Common myeloid progenitor, CD34-positive (primary cell): ENCODE measurements at regions of chr12 and their contacts with region 1.

Region 1: DNA sequence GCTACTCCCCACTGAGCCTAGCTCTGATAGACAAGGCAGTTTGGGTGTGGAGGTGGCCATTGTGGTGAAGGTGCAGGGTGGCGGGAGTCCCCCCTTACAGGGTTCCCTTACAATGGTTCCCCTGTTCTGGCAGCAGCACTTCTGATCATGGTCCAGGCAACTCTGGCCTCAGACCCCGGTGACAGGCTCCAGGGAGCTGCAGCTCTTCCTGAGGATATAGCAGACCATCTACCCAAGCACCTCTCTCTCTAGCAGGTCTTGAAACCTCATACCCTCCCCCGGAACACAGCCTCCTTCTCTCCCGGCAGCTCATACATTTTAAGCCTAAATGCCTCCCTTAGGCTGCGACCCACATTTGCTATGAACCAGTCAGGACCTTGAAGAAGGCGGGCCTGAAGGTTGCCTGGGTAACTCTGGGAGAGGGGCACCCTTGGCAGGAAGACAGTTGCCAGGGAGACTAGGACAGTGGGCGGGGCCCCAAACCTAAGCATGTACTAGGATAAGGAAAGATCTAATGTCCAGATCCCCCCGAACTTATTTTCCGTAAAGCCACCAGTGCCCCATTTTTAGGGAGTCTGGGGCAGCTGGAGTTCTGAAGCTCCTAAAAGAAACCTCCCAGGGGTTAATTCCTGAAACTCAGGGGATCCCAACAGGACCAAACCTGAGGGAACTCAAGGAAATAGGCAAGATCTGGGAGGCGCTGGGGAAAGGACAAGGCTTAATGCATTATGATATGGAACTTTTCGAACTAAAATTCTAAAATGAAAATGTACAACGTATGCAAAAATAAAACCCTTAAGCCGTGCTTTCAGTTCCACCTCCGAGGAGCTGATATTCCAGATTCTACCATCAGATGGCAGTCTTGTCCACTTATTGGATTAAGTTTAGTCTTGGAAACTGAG is 4.5 kb upstream of the GDF11 start:
- DNase-seq: peak; percentile 82 to 90 (median 90)
- H3K4me3 ChIP-seq: peak overlapping the region; percentile 39 to 97 (median 79)
- H3K27ac ChIP-seq: peak overlapping the region; percentile 61 to 82
- H3K4me1 ChIP-seq: peaks cover 6 to 34% (median 28%) of the 10 kb centered on the region in 4 experiments
- H3K27me3 ChIP-seq: no peaks in the 10 kb centered on the region

Region 2: DNA sequence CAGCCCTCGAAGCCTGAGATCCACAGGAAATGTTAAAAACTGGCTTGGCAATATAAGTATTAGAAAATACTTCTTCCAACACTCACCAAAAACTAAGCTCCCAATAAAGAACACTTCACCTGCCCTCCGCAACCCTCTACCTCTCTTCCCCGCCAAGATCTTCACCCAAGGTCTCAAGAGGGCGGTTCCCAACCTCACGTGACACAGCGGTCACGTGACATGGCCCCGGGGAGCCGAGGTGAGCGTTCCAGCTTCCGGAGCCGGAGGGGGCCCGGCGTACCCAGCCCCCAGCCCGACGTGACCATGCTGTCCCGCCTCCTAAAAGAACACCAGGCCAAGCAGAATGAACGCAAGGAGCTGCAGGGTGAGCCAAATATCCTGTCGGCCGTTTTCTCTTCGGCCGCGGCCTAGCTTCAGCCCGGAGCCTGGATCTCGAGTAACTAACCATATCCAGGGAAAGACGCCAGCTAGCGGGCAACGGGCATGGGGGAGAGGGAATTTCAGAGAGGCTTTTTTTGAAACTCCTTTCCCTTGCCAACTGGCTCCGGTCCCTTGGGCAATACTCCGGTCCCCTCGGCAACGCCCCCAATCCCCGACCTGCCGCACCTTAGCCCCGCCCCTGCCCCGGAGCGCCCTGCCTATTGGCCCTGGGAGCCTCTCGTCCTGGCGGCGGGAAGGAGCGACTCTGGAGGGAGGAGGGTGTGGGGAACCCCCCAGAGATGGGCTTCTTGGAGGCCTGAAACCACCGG is 22.4 kb before region 1 on chr12 and contains the start of gene BLOC1S1:
- CTCF ChIA-PET with region 1: interaction called, 119 read pairs
- POLR2A ChIA-PET with region 1: interaction called, 3 read pairs
- DNase-seq: peak; percentile 88 to 93 (median 91)
- H3K4me3 ChIP-seq: peak within 1 kb of the TSS; percentile 83 to 98 (median 92)
- H3K27ac ChIP-seq: peak within 1 kb of the TSS; percentile 87 to 89
- H3K4me1 ChIP-seq: peaks cover 3 to 27% (median 19%) of the 10 kb centered on the region in 4 experiments
- H3K27me3 ChIP-seq: peaks cover 0 to 2% (median 0%) of the 10 kb centered on the region in 5 experiments

Region 3: DNA sequence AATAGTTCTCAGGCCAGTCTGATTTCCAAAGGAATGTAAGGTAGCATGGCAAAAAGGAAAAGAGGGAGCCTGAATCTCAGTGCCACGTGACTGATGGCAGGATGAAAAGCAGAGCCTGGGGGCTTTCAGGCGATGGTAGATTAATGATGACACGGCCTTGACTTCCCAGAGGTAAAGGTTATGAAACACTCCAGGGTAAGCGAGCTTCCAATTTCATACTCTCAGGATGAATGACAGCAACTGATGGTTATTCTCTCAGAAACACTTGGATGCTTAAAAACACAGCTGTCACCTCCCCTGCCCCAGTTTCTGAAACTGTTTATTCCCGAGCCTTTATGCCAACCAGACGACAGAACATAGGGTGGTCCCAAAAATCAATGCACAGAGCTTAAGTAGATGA is 33.4 kb after region 1 on chr12:
- CTCF ChIA-PET with region 1: interaction called, 13 read pairs
- POLR2A ChIA-PET with region 1: no interaction called
- DNase-seq: no peak
- H3K4me3 ChIP-seq: no peak overlapping the region
- H3K27ac ChIP-seq: no peak overlapping the region
- H3K4me1 ChIP-seq: no peaks in the 10 kb centered on the region
- H3K27me3 ChIP-seq: no peaks in the 10 kb centered on the region

Region 4: DNA sequence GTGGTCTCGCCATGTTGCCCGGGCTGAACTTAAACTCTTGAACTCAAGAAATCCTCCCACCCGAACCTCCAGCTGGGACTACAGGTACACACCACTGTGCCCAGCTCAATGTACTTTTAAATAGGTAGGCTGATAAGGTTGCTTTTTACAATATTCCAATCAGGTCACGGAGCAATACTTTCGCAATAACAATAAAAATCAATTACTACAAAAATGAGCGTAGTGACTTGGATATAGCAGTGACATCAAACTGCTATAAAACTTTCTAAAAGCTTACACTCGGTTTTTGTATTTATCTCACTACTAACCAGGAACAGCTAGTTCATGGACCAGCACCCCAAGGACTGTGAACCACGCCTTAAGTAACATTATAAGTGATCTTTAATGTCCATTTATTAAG is 68.6 kb after region 1 on chr12:
- CTCF ChIA-PET with region 1: interaction called, 21 read pairs
- POLR2A ChIA-PET with region 1: no interaction called
- DNase-seq: no peak
- H3K4me3 ChIP-seq: no peak overlapping the region
- H3K27ac ChIP-seq: no peak overlapping the region
- H3K4me1 ChIP-seq: no peaks in the 10 kb centered on the region
- H3K27me3 ChIP-seq: no peaks in the 10 kb centered on the region

Region 5: DNA sequence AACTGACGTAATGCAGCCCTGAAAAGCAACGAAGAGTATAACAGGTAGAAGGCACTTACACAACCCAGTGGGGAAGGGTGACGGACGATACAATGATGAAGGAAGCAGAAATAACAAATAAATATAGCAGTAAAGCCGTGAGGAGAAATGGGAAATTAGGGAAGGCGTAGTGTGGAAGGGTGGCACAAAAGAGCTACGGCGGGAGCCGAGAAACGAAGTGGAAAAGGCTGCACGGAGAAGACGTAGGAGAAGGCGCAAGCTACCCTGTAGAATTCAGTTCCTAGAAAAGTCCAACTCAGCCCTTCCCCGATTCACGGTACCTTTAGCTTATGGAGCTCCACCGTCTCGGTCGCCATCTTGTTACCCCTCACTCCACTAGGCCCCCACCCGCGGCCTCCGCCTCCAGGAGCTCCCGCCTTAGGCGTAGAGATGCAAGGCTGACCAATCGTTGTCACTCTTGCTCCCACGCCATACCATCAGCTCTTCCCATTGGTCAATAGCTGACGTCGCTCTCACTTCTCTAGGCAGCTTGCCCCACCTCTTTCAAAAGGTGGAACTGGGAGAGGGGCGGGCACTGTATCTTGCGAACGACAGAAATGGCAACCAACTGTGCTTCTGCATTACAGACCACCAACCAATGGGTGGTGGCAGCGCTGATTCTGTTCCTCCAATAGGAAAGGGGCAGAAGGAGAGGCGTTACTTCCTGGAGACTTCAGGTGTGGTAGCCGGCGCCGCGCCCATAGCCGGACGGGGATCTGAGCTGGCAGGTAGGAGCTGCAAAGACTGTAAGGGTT is 79.2 kb after region 1 on chr12 and contains the starts of genes ORMDL2 and SARNP:
- CTCF ChIA-PET with region 1: interaction called, 15 read pairs
- POLR2A ChIA-PET with region 1: interaction called, 3 read pairs
- DNase-seq: peak; percentile 100
- H3K4me3 ChIP-seq: peak within 1 kb of the TSS; percentile 84 to 100 (median 99)
- H3K27ac ChIP-seq: peak within 1 kb of the TSS; percentile 92 to 95
- H3K4me1 ChIP-seq: peaks cover 14 to 27% (median 19%) of the 10 kb centered on the region in 4 experiments
- H3K27me3 ChIP-seq: no peaks in the 10 kb centered on the region

Region 6: GRCh38 chr12:55940065-55940732 is 201.8 kb after region 1 on chr12:
- CTCF ChIA-PET with region 1: interaction called, 26 read pairs
- POLR2A ChIA-PET with region 1: interaction called, 3 read pairs
- DNase-seq: peak; percentile 81 to 87 (median 82)
- H3K4me3 ChIP-seq: peak overlapping the region in 1 of 7 experiments; percentile 6
- H3K27ac ChIP-seq: no peak overlapping the region
- H3K4me1 ChIP-seq: peaks cover 0 to 8% (median 6%) of the 10 kb centered on the region in 4 experiments
- H3K27me3 ChIP-seq: no peaks in the 10 kb centered on the region